Activated CD4-positive, alpha-beta memory T cell treated with anti-CD3 and anti-CD28 coated beads for 36 hours (primary cell): ENCODE measurements at regions of chr10 and their contacts with region 1.

Region 1: DNA sequence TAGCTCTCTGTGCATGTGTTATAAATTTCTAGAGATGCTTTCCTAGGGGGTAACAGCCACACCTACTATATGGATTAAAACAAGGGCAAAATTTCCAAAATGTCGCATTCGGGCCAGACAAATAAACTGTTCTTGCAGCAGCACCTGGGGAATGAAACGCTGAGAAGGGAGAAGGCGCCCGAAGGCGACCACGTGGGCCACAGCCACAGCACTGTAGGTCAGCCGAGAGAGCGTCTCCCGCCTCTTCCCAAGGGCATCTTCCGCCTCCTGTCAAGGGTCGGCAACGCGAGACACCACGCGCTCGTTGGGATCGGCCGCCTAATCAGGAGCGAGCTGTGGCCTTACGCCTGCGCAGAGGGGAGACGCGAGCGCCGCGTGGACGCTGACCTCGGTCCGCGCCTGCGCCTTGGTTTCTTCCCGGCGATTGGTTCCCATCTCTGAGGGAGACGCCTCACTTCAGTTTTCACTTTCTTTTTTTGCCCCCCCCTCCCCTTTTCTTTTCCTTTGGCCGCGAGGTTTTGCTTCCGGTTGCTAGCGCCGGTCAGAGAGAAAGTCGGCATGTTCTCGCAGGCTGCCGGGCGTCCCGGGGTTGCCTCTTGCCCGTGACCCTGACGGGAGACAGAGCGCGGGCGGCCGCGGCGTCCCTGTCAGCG is at the start of gene TASOR2:
- DNase-seq: peak; percentile 98
- H3K4me3 Mint-ChIP-seq: peak within 1 kb of the TSS; percentile 98
- H3K27ac Mint-ChIP-seq: peak within 1 kb of the TSS; percentile 94
- H3K4me1 Mint-ChIP-seq: peaks cover 56% of the 10 kb centered on the region
- H3K27me3 Mint-ChIP-seq: peaks cover 3% of the 10 kb centered on the region
- total RNA-seq, gene TASOR2: 41.8 to 43.8 TPM

Region 2: DNA sequence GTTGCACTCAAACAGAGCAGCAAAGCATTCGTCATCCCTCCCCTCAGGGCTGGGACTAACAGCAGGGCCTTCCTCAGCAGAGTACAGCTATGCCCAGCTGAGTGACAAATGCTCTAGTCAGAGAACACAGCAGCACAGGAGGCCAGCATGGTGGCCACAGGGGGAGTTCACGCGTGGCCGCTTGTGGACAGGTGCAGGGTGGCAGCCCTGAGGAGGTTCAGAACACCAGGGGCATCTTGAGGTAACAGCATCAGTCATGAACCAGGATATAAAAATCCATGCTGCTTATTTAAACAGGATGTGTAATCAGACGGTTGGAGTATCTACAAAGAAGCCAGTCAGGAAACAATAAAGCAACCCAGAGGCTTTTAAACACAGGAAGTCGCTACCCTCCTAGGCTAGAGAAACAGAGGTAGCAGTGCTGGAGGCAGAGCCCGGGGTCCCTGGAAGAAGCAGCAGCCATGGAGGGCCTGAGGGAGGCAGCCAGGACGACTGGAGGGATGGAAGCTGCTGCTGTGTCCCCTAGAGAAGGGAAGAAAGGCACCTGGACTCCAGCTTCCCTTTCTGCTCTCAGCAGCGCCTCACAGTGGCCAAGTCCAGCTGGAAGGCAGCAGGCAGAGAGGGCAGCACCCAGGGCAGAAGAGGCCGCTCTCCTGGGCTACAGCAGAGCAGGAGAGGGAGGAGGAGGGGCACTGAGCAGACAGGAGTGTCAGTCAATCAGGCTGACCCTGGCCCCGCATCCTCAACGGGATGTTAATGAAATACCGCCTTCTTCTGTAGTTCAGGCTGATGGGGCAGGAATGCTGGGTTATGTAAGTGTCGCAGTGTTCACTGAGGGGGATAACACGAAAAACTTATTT is 390.5 kb before region 1 on chr10:
- CTCF ChIA-PET with region 1: no interaction called
- POLR2A ChIA-PET with region 1: no interaction called
- intact Hi-C with region 1: loop called (anchors 10 kb)
- DNase-seq: peak; percentile 91
- H3K4me3 Mint-ChIP-seq: peak overlapping the region; percentile 86
- H3K27ac Mint-ChIP-seq: peak overlapping the region; percentile 95
- H3K4me1 Mint-ChIP-seq: peaks cover 79% of the 10 kb centered on the region
- H3K27me3 Mint-ChIP-seq: no peaks in the 10 kb centered on the region

Region 3: DNA sequence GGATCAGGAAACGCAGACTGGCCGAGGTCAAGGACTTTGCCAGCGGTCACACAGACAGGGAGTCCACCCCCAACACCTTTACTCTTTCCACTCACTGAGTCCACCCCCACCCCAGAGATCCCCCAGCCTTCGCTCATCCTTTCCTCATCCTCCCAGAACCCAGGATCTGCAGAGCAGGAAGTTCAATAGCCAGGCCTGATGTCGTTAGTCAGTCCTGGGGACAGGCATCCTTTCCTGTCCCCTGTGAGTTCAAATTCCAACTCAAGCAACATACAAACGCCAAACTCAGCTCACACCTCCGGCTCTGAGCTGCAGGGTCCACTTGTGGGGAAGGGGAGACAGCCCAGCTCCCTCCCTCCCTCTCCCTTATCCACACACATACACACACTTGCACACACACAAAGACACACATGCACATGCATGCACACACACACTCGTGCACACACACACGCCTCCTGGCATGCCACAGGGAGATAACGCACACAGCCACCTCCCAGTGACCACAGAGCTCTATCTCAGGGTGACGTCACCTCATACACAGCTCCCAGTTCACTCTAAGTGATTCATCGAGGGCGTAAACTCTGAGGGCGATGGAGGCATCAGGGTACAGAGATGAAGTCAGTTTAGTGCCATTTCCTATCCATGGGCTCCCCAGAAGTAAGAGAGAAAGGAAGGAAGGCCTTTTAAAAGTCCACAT is 135.8 kb before region 1 on chr10:
- CTCF ChIA-PET with region 1: no interaction called
- POLR2A ChIA-PET with region 1: no interaction called
- intact Hi-C with region 1: no loop called
- DNase-seq: peak; percentile 78
- H3K4me3 Mint-ChIP-seq: no peak overlapping the region
- H3K27ac Mint-ChIP-seq: no peak overlapping the region
- H3K4me1 Mint-ChIP-seq: peaks cover 27% of the 10 kb centered on the region
- H3K27me3 Mint-ChIP-seq: no peaks in the 10 kb centered on the region

Region 4: GRCh38 chr10:5629303-5630111 is 54.9 kb before region 1 on chr10:
- CTCF ChIA-PET with region 1: interaction called, 9 read pairs
- POLR2A ChIA-PET with region 1: no interaction called
- intact Hi-C with region 1: loop called (anchors 1 kb)
- DNase-seq: peak; percentile 91
- H3K4me3 Mint-ChIP-seq: peak overlapping the region; percentile 14
- H3K27ac Mint-ChIP-seq: peak overlapping the region; percentile 69
- H3K4me1 Mint-ChIP-seq: peaks cover 31% of the 10 kb centered on the region
- H3K27me3 Mint-ChIP-seq: peaks cover 3% of the 10 kb centered on the region

Region 5: DNA sequence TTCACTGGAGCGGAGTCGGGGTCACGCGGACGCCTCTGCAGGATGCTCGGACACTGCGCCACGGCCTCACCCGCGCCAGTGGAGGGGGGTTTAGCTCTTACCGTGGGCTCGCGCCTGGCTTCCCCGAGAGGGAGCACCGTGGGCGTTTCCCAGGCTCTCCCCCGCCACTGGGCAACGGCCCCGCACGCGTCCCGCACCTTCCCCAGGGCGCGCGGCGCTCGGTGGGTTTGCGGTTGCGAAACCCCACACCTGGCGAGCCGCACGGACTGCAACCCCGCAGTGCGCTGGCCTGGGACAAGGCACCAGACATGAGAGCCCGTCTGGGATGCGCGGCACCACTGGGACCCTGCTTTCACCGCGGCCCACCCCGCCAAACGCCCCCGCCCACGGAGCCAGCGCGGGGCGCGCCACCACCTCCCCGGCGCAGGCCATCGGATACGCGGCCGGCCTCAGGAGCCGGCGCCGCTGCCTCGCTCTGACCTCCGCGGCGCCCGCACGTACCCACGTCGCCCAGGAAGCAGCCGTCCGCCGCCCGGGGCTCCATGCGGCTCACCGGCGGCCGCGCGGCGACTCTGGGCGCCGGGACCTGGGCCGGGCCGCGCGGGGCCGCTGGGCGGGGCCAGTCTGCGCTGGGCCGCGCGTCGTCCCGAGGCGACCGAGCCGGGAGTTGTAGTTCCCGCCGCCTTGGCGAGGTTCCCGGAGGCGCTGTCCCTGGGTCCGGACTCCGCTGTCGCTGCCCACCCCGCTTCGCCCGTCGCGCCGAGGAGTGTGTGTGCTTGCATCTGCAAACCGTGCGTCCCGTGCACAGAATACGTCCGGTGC is 18.2 kb before region 1 on chr10 and contains the start of gene ASB13:
- CTCF ChIA-PET with region 1: no interaction called
- POLR2A ChIA-PET with region 1: interaction called, 8 read pairs
- intact Hi-C with region 1: loop called (anchors 2 kb)
- DNase-seq: peak; percentile 60
- H3K4me3 Mint-ChIP-seq: peak within 1 kb of the TSS; percentile 84
- H3K27ac Mint-ChIP-seq: peak within 1 kb of the TSS; percentile 57
- H3K4me1 Mint-ChIP-seq: peaks cover 18% of the 10 kb centered on the region
- H3K27me3 Mint-ChIP-seq: no peaks in the 10 kb centered on the region
- total RNA-seq, gene ASB13: 12.1 to 12.5 TPM

Region 6: DNA sequence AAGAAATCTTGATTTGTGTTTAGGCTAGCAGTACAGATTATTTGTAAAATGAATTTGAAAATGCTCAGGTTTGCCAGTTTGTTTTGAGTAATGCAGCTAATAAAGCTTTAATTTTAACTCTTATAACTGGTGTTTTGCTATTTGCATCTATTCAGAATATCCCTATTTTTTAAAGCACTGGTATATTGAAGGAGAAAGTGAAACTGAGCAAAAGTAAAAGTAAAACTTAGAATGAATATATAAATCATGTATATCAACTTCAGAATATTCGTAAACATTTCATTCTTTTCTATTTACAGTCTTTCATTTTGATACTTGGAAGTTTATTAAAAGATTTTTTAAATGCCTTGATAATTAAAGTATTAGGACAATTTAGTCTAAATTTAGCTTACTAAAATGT is 26.4 kb after region 1 on chr10:
- CTCF ChIA-PET with region 1: interaction called, 3 read pairs
- POLR2A ChIA-PET with region 1: no interaction called
- intact Hi-C with region 1: loop called (anchors 2 kb)
- DNase-seq: no peak
- H3K4me3 Mint-ChIP-seq: no peak overlapping the region
- H3K27ac Mint-ChIP-seq: no peak overlapping the region
- H3K4me1 Mint-ChIP-seq: peaks cover 58% of the 10 kb centered on the region
- H3K27me3 Mint-ChIP-seq: no peaks in the 10 kb centered on the region

Region 7: GRCh38 chr10:5732141-5732540 is 47.7 kb after region 1 on chr10:
- CTCF ChIA-PET with region 1: interaction called, 4 read pairs
- POLR2A ChIA-PET with region 1: no interaction called
- intact Hi-C with region 1: loop called (anchors 5 kb)
- DNase-seq: no peak
- H3K4me3 Mint-ChIP-seq: no peak overlapping the region
- H3K27ac Mint-ChIP-seq: peak overlapping the region; percentile 38
- H3K4me1 Mint-ChIP-seq: peaks cover 24% of the 10 kb centered on the region
- H3K27me3 Mint-ChIP-seq: no peaks in the 10 kb centered on the region

Region 8: GRCh38 chr10:5889624-5890451 is 205.4 kb after region 1 on chr10 and contains the starts of genes ANKRD16 and FBH1:
- CTCF ChIA-PET with region 1: interaction called, 3 read pairs
- POLR2A ChIA-PET with region 1: no interaction called
- intact Hi-C with region 1: loop called (anchors 1 kb)
- DNase-seq: peak; percentile 98
- H3K4me3 Mint-ChIP-seq: peak within 1 kb of the TSS; percentile 93
- H3K27ac Mint-ChIP-seq: peak within 1 kb of the TSS; percentile 80
- H3K4me1 Mint-ChIP-seq: peaks cover 50% of the 10 kb centered on the region
- H3K27me3 Mint-ChIP-seq: no peaks in the 10 kb centered on the region
- total RNA-seq, gene ANKRD16: 5.9 to 6.4 TPM
- total RNA-seq, gene FBH1: 57.8 to 63.4 TPM

Region 9: DNA sequence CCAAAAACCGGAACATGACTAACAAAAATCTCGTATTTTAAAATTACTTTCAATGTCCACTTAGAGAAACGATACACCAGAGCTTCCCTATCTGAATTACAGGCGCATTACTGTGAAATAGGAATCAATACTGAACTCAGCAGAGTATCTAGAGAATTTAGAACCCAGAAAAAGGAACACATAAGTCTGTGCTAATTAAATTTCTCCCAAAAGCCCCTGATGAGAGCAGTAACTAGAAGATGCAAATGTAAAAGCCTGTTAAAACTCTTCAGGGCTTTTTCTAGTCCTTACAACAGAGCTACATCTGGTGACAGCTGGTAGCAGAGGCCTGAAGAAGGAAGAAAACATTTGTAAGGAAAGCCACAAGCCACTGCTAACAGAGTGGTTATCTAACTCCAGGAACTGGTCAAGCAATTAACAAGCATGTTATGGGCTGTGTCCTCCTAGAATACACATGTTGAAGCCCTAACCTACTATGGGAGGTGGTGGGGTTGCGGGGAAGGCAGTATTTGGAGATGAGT is 1958.1 kb after region 1 on chr10:
- CTCF ChIA-PET with region 1: no interaction called
- POLR2A ChIA-PET with region 1: no interaction called
- intact Hi-C with region 1: no loop called
- DNase-seq: no peak
- H3K4me3 Mint-ChIP-seq: no peak overlapping the region
- H3K27ac Mint-ChIP-seq: no peak overlapping the region
- H3K4me1 Mint-ChIP-seq: no peaks in the 10 kb centered on the region
- H3K27me3 Mint-ChIP-seq: peaks cover 22% of the 10 kb centered on the region